CD8-positive, alpha-beta T cell (primary cell): ENCODE measurements at regions of chr17 and their contacts with region 1.

Region 1: GRCh38 chr17:29760761-29761696 is 138.3 kb upstream of the CORO6 start:
- DNase-seq: peak; percentile 80 to 95 (median 92)
- ATAC-seq: peak; percentile 84
- H3K4me3 ChIP-seq: peak overlapping the region; percentile 84 to 88
- H3K4me3 Mint-ChIP-seq: peak overlapping the region; percentile 96
- H3K27ac ChIP-seq: peak overlapping the region; percentile 75 to 81
- H3K27ac Mint-ChIP-seq: peak overlapping the region; percentile 93
- H3K4me1 ChIP-seq: peaks cover 42% of the 10 kb centered on the region
- H3K4me1 Mint-ChIP-seq: peaks cover 41% of the 10 kb centered on the region
- H3K27me3 ChIP-seq: no peaks in the 10 kb centered on the region
- H3K27me3 Mint-ChIP-seq: no peaks in the 10 kb centered on the region
- CTCF ChIP-seq: no peak

Region 2: DNA sequence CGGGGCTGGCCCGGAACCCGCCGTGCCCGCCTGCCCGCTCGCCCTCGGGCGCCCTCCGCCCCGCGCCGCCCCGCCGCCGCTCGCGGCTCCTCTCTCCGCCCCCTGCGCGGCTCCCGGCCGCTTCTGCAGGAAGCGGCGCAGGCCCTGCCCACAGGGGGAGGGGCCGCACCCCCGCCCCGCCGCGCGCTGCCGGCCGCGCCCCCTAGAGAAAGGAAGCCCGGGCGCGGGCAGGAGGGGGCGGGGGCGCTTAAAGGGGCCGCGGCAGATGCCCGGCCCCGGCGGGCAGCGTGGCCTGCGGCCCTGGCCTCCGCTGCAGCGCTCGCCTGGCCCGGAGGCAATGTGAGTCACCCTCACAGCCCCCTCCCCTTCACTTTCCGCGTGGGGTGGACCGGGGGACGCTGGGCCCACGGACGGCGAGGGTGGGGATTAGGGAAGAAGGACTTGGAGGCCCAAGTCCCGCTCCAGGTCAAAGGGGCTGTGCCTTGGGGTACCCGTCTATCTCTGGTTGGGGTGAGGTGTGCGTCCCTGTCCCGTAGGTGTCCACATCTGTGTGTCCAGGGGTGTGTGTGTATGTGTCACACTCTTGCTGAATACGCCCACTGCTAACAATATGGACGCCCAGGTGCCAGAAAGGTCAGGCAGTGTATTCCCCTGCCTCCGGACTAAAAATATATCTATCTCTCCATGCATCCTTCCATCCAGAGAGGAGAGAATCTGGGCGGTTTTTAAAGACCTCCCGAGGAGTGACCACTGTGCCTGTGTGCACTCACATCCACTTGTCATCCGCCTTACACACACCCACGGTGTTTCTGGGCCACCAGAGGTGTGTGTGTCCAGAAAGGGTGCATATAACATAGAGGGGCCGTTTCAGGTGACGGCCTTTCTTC is 171.3 kb before region 1 on chr17 and contains the start of gene GIT1:
- CTCF ChIA-PET with region 1: interaction called, 4 read pairs
- POLR2A ChIA-PET with region 1: no interaction called
- intact Hi-C with region 1: loop called (anchors 1 to 5 kb)
- DNase-seq: peak; percentile 59 to 93 (median 83)
- ATAC-seq: peak; percentile 86
- H3K4me3 ChIP-seq: peak within 1 kb of the TSS; percentile 73 to 75
- H3K4me3 Mint-ChIP-seq: peak within 1 kb of the TSS; percentile 93
- H3K27ac ChIP-seq: peak within 1 kb of the TSS; percentile 18 to 64
- H3K27ac Mint-ChIP-seq: peak within 1 kb of the TSS; percentile 89
- H3K4me1 ChIP-seq: peaks cover 78% of the 10 kb centered on the region
- H3K4me1 Mint-ChIP-seq: peaks cover 59% of the 10 kb centered on the region
- H3K27me3 ChIP-seq: no peaks in the 10 kb centered on the region
- H3K27me3 Mint-ChIP-seq: no peaks in the 10 kb centered on the region
- CTCF ChIP-seq: no peak
- total RNA-seq, gene GIT1: 25.8 to 27.0 TPM

Region 3: GRCh38 chr17:29682054-29682453 is 79.0 kb before region 1 on chr17:
- CTCF ChIA-PET with region 1: no interaction called
- POLR2A ChIA-PET with region 1: interaction called, 5 read pairs
- intact Hi-C with region 1: loop called in 1 of 2 experiments (anchors 2 kb)
- DNase-seq: peak in 2 of 9 experiments; percentile 12 to 47
- ATAC-seq: peak; percentile 49
- H3K4me3 ChIP-seq: no peak overlapping the region
- H3K4me3 Mint-ChIP-seq: no peak overlapping the region
- H3K27ac ChIP-seq: peak overlapping the region in 1 of 2 experiments; percentile 9
- H3K27ac Mint-ChIP-seq: peak overlapping the region; percentile 39
- H3K4me1 ChIP-seq: peaks cover 4% of the 10 kb centered on the region
- H3K4me1 Mint-ChIP-seq: peaks cover 27% of the 10 kb centered on the region
- H3K27me3 ChIP-seq: no peaks in the 10 kb centered on the region
- H3K27me3 Mint-ChIP-seq: no peaks in the 10 kb centered on the region
- CTCF ChIP-seq: no peak

Region 4: DNA sequence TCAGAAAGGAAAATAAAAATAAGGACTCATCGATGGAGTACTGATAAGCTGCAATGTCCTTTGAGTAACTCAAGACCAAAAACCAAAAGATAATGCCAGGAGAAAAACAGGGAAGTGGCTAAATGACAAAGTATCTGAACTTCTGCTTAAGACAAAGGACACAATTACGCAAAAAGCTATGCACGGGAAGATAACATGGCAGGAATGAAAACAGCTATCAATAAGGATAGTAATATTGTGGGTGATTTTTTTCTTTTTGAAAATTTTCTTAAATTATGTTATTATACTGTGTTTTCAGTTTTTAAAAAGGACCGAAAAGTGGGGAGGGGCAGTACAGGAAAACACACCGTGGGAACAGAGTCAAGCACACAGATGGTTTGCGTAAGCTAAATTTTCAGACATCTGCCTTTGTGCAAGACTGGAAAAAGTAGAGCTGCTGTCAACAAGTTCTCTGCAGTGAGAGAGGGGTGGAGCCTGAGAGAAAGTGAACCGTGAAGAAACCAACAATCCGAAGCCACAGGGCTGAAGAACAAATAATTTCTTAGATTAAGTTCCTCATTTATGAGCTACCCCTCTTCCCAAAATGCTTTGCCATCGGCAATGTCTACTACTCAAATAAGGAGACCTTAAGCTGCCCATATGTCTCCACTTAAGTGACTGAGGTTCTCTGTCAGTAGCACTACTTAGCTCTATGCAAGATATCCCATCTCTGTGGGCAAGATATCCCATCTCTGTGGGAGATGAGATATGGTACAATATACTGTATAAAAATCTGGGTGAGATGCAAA is 38.4 kb before region 1 on chr17:
- CTCF ChIA-PET with region 1: interaction called, 4 read pairs
- POLR2A ChIA-PET with region 1: interaction called, 38 read pairs
- intact Hi-C with region 1: loop called (anchors 1 to 5 kb)
- DNase-seq: peak; percentile 16 to 85 (median 53)
- ATAC-seq: peak; percentile 77
- H3K4me3 ChIP-seq: peak overlapping the region; percentile 10 to 30
- H3K4me3 Mint-ChIP-seq: peak overlapping the region; percentile 73
- H3K27ac ChIP-seq: peak overlapping the region; percentile 46 to 73
- H3K27ac Mint-ChIP-seq: peak overlapping the region; percentile 94
- H3K4me1 ChIP-seq: peaks cover 70% of the 10 kb centered on the region
- H3K4me1 Mint-ChIP-seq: peaks cover 84% of the 10 kb centered on the region
- H3K27me3 ChIP-seq: no peaks in the 10 kb centered on the region
- H3K27me3 Mint-ChIP-seq: no peaks in the 10 kb centered on the region
- CTCF ChIP-seq: no peak